ENCODE measurements at regions of chr4 and their contacts with region 1.

Region 1: DNA sequence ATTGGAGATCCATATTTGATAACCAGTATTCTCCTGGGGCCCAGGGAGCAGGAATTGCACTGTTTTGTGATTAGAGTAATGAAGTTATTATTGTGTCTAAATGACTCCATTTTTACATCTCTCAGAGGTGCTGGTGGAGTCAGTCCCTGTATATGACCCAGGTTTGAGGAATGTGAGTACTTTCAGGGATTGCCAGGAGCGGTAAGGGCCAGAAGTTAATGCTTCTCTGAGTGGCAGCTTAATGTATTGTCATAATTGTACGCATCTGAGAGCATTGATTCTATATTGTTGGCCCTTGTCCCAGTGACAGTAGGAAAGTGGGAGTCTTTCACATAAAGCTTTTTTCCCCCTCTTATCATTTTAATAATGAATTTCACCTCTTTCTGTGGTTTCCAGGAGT is 146.2 kb downstream of the GATB start:
- DNase-seq: no peak
- H3K4me3 ChIP-seq: no peak overlapping the region
- H3K27ac ChIP-seq: no peak overlapping the region
- H3K4me1 ChIP-seq: no peaks in the 10 kb centered on the region
- H3K27me3 ChIP-seq: no peaks in the 10 kb centered on the region
- CTCF ChIP-seq: no peak

Region 2: GRCh38 chr4:151276787-151277562 is 337.6 kb before region 1 on chr4 and contains the start of gene PRSS48:
- CTCF ChIA-PET with region 1: no interaction called
- POLR2A ChIA-PET with region 1: no interaction called
- intact Hi-C with region 1: loop called (anchors 5 kb)
- DNase-seq: peak; percentile 74
- H3K4me3 ChIP-seq: no peak within 1 kb of the TSS
- H3K27ac ChIP-seq: no peak within 1 kb of the TSS
- H3K4me1 ChIP-seq: no peaks in the 10 kb centered on the region
- H3K27me3 ChIP-seq: no peaks in the 10 kb centered on the region
- CTCF ChIP-seq: peak; percentile 89
- total RNA-seq, gene PRSS48: not detected in 2 replicates

Region 3: GRCh38 chr4:151921811-151922210 is 307.2 kb after region 1 on chr4:
- CTCF ChIA-PET with region 1: no interaction called
- POLR2A ChIA-PET with region 1: no interaction called
- intact Hi-C with region 1: no loop called
- DNase-seq: no peak
- H3K4me3 ChIP-seq: no peak overlapping the region
- H3K27ac ChIP-seq: no peak overlapping the region
- H3K4me1 ChIP-seq: no peaks in the 10 kb centered on the region
- H3K27me3 ChIP-seq: no peaks in the 10 kb centered on the region
- CTCF ChIP-seq: no peak